ENCODE measurements at regions of chr16 and their contacts with region 1.

Region 1: DNA sequence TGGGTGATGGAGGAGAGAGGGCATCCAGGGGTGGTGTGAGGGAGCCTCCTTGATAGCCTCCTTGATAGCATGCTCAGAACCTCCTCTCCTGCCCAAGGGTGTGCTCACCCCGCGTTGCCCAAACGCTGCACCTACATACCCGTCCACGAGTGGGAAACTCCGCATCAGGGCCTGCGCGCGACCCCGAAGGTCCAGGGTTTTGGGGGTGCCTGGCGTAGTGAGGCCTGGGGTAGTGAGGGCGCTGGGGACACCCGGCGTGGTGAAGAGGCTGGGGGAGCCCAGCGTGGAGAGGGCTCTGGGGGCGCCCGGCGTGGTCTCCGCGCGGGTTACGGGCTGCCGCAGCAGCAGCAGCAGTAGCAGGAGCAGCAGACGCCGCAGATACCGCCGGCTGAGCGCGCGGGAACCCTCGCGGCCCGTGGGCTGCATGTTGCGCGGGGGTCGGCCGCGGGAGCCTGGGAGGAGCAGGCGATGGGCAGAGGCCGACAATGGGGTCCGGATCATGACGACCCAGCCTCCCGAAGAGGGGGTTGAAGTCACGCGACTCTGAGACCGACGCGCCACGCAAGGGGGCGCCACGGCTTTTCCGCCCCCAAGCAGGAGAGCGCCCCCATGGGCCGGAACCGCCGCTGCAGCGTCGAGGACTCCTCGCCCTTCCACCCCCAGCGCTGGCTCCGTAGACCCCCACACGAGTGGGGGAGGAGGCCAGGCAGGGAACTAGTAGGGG is at the start of gene DPEP3:
- DNase-seq: no peak
- ATAC-seq: no peak
- H3K4me3 ChIP-seq: no peak within 1 kb of the TSS
- H3K27ac ChIP-seq: no peak within 1 kb of the TSS
- H3K4me1 ChIP-seq: peaks cover 4 to 22% of the 10 kb centered on the region in 2 donors
- H3K27me3 ChIP-seq: peaks cover 0 to 10% of the 10 kb centered on the region in 2 donors
- CTCF ChIP-seq: no peak
- polyA plus RNA-seq, gene DPEP3: 0.08 to 0.09 TPM in 2 of 6 donors, not detected in the others

Region 2: GRCh38 chr16:68040507-68041288 is 60.6 kb after region 1 on chr16:
- intact Hi-C with region 1: loop called in 1 of 2 experiments (anchors 10 kb)
- DNase-seq: peak; percentile 33 to 96 (median 78)
- ATAC-seq: peak; percentile 100
- H3K4me3 ChIP-seq: no peak overlapping the region
- H3K27ac ChIP-seq: peak overlapping the region in 1 of 2 donors; percentile 83
- H3K4me1 ChIP-seq: peaks cover 0 to 62% of the 10 kb centered on the region in 2 donors
- H3K27me3 ChIP-seq: no peaks in the 10 kb centered on the region
- CTCF ChIP-seq: peak; percentile 80 to 92

Region 3: DNA sequence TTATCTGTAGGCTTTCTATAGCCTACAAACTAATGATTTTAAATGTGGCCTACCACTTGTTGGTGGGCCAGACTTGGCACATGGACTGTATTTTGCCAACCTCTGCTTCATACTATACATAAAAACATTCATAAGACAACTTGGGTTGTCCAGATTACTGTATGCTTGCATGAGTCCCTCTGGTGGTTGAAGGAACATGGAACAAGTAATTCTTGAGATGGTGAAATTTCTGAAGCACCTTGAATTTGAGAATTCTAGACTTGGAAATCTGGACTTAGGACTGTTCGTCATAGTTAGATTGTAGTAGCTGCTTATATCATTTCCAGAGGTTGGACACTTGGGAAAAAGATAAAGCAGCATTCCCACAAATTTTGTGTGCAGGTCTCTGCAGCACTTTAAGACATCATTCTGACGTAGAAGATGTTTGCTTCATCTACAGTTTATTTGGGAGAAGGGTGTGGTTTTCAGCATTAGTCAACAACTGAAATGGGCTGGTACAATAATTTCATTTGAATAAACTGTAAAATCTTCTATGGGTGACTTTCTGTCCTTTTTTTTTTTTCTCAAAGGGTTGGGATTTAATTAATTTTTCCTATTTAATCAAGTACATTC is 136.2 kb after region 1 on chr16:
- intact Hi-C with region 1: no loop called
- DNase-seq: peak in 1 of 4 donors; percentile 15
- ATAC-seq: peak; percentile 57
- H3K4me3 ChIP-seq: no peak overlapping the region
- H3K27ac ChIP-seq: no peak overlapping the region
- H3K4me1 ChIP-seq: peaks cover 6 to 47% of the 10 kb centered on the region in 2 donors
- H3K27me3 ChIP-seq: no peaks in the 10 kb centered on the region
- CTCF ChIP-seq: peak in 1 of 2 donors; percentile 20

Measured in left lung (tissue), 14 donors.